ENCODE measurements at regions of chrX and their contacts with region 1.

Region 1: DNA sequence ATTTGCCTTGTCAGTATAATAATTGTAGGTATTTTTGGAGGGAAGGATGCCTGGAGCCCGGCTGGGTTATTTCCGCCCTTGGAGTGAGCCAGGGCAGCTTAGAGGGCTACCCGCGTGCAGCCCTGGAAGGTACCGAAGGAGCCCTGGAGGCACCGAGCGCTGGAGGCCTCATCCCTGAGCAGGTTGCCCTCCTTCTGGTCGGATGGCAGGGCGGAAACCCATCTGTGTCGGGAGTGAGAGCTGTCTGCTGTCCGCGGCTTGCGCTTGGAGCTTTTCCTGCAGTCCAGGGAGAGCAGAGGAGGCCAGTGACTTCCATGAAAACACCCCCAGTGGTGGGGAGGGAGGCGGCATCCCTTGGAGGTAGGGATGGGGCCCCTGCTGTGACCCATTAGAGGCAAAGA is 122.1 kb downstream of the TBL1X start:
- DNase-seq: no peak
- ATAC-seq: peak in 1 of 2 donors; percentile 26
- H3K4me3 ChIP-seq: no peak overlapping the region
- H3K27ac ChIP-seq: no peak overlapping the region
- H3K4me1 ChIP-seq: peaks cover 2% of the 10 kb centered on the region
- H3K27me3 ChIP-seq: no peaks in the 10 kb centered on the region

Region 2: GRCh38 chrX:9320940-9321339 is 266.1 kb before region 1 on chrX:
- intact Hi-C with region 1: loop called in 1 of 4 experiments (anchors 5 kb)
- DNase-seq: no peak
- ATAC-seq: no peak
- H3K4me3 ChIP-seq: no peak overlapping the region
- H3K27ac ChIP-seq: no peak overlapping the region
- H3K4me1 ChIP-seq: no peaks in the 10 kb centered on the region
- H3K27me3 ChIP-seq: no peaks in the 10 kb centered on the region

Measured in right cardiac atrium (tissue), 5 donors.